Posterior vena cava (tissue), 2 donors: ENCODE measurements at regions of chr14 and their contacts with region 1.

Region 1: GRCh38 chr14:22375321-22375930 is 213.6 kb downstream of the DAD1 start:
- DNase-seq: no peak

Region 2: GRCh38 chr14:22314181-22314820 is 61.1 kb before region 1 on chr14:
- intact Hi-C with region 1: loop called in 1 of 2 experiments (anchors 10 kb)
- DNase-seq: no peak

Region 3: DNA sequence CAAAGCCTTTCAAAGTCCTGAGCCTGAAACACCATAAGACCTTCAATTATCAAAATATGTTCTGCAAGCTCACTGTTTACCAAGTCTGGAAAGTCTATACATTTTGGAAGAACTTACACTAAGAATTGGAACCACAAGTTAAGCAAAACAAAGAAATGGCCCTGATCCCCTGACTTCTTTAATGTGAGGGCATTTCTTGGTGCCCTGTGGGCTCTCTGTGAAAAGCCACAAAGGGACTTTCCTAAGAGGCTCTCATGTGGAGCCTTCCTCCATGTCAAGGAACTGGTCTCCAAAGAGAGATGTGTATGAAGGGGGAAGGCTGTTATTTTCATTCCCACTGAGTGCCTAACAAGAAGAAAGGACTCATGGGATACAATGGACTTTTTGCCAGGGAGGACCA is 1046.2 kb after region 1 on chr14:
- intact Hi-C with region 1: no loop called
- DNase-seq: no peak